Thyroid gland (tissue), 4 donors: ENCODE measurements at regions of chr17 and their contacts with region 1.

Region 1: DNA sequence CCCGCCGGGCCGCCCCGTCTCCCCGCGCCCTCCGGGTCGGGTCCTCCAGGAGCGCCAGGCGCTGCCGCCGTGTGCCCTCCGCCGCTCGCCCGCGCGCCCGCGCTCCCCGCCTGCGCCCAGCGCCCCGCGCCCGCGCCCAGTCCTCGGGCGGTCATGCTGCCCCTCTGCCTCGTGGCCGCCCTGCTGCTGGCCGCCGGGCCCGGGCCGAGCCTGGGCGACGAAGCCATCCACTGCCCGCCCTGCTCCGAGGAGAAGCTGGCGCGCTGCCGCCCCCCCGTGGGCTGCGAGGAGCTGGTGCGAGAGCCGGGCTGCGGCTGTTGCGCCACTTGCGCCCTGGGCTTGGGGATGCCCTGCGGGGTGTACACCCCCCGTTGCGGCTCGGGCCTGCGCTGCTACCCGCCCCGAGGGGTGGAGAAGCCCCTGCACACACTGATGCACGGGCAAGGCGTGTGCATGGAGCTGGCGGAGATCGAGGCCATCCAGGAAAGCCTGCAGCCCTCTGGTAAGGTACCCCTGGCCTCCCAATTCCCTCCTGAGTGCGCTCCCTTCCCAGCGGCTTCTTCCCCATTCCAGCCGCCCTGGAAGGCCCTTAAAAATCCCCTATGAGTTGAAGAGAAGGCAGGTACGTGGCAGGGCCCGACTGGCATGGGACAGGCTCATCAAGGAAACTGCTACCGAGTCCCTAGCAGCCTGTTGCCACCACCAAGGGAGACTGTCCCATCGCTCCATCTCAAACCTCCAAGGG is 505 bp downstream of the IGFBP4 start:
- DNase-seq: peak; percentile 83 to 88
- H3K4me3 ChIP-seq: peak overlapping the region; percentile 65 to 77 (median 76)
- H3K27ac ChIP-seq: peak overlapping the region; percentile 93 to 98 (median 94)
- H3K4me1 ChIP-seq: peaks cover 32 to 37% of the 10 kb centered on the region in 2 donors
- H3K27me3 ChIP-seq: no peaks in the 10 kb centered on the region
- CTCF ChIP-seq: peak in 3 of 6 experiments; percentile 22 to 45 (median 37)
- POLR2A ChIP-seq: peak in 1 of 2 donors; percentile 33

Region 2: DNA sequence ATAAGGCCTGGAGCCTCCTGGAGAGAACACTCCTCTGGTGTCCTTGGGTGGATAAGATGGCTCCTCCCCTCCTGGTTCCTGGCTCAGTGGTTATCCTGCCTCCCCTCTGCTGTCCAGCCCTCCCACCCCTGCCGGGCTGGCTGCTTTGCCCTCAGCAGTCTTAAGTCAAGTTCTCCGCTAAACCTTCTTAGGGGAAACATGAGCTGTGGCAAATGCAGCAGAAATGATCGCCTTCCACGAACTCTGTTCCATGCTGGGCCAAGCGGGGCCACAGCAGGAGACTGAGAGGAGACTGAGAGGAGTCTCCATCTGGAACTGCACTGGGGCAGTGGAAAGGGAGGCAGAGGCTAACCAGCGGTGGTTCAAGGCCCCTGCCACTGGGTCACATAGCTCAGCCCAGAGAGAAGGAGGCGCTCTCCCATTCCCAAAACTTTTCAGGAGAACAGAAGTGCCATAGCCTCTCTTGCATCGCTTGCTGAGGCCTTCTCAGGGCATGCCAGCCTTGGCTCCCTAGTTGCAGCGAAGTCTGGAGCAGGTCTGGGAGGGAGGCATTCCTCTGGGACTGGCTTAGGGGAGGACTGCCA is 30.8 kb after region 1 on chr17:
- intact Hi-C with region 1: loop called (anchors 2 kb)
- DNase-seq: peak in 1 of 2 donors; percentile 46
- H3K4me3 ChIP-seq: no peak overlapping the region
- H3K27ac ChIP-seq: peak overlapping the region in 1 of 3 donors; percentile 52
- H3K4me1 ChIP-seq: peaks cover 11 to 28% of the 10 kb centered on the region in 2 donors
- H3K27me3 ChIP-seq: no peaks in the 10 kb centered on the region
- CTCF ChIP-seq: no peak
- POLR2A ChIP-seq: peak in 1 of 2 donors; percentile 8

Region 3: DNA sequence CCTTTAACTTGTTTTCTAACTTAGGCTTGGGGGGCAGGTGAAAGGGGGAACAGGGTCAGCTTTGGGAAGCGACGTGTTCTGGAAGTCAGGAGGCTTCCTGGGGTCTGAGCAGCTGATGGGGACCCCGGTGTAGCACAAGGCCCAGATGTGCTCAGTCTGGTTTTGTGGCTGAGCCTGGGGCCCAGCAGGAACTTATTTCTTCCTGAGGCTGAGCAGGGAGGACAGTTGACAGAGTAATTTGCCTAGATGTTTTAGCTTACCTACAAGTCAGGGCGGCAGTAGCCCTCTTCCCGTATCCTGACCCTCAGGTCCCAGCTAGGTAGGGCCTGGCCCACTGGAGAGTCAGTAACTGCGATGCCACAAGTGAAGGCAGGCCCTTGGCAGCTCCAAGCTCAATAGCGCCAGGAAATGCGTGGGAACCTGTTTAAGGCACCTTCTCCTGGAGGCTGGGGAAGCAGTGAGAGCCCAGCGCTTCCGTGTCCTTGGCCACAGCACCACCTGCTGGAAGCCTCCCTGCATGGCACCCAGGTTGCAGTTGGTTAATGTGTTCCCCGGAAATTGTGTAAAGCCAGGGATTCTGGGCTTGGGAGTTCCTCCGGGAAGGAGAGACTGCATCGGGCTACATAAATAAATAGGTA is 116.3 kb after region 1 on chr17:
- intact Hi-C with region 1: loop called (anchors 5 kb)
- DNase-seq: peak; percentile 94 to 95
- H3K4me3 ChIP-seq: no peak overlapping the region
- H3K27ac ChIP-seq: peak overlapping the region; percentile 83 to 95 (median 93)
- H3K4me1 ChIP-seq: peaks cover 11 to 64% of the 10 kb centered on the region in 2 donors
- H3K27me3 ChIP-seq: no peaks in the 10 kb centered on the region
- CTCF ChIP-seq: peak; percentile 94 to 100 (median 98)
- POLR2A ChIP-seq: peak in 1 of 2 donors; percentile 56